ENCODE measurements at regions of chr1 and their contacts with region 1.

Region 1: DNA sequence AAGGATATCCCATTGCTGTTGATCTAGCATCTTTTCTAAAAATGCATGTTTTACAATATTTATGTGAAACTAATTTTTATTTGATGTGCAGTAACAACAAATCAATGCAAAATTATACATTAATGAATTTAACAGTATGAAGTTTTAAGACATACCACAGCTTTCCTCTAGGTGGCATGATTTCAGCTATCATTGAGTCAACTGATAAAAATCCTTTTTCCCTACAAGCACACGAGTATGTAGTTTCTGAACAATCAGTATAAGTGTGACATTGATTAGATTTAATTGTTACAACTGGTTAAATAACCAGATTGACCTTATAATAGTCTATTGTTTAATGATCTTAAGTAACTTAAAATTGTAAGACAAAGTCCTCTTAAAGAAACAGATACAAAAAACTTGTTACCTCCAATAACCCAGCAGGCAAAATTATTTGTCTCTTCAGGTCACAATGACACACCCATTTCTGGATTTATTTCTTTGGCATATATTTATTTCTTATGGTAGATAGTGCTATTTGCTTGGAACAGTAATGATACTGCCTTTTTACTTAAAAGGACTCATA is 5.8 kb upstream of the TGFB2 start:
- DNase-seq: no peak
- H3K4me3 ChIP-seq: no peak overlapping the region
- H3K4me3 Mint-ChIP-seq: no peak overlapping the region
- H3K27ac ChIP-seq: no peak overlapping the region
- H3K27ac Mint-ChIP-seq: no peak overlapping the region
- H3K4me1 ChIP-seq: peaks cover under 1% of the 10 kb centered on the region
- H3K4me1 Mint-ChIP-seq: no peaks in the 10 kb centered on the region
- H3K27me3 ChIP-seq: no peaks in the 10 kb centered on the region
- H3K27me3 Mint-ChIP-seq: no peaks in the 10 kb centered on the region

Region 2: DNA sequence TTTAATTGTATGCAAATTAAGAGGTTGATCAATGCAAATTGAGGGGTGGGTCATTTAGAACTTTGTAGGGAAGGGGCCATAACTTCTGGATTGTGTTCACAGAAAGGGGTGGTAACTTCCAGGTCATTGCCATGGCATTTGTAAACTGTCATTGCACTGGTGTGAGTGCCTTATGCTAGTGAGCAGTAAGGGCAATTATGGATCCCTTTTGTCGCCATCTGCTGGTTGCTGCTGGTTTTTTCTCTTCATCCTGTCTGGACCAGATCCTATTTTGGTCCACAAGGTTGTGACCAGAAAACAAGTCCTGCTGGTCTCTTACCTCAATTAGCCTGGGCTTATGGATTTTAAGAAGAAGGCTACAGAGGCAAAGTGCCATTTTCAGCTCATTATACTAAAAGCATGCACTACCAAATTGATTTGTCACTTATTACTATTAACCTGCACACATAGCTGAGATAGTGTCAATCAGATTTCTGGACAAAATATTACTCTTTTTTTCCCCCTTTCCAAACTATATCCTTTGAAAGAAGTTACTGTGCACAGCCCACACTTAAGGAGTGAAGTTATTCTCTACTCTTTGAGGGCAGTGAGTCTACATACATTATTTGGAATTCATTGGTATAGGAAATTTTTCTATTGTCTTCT is 1077.4 kb after region 1 on chr1:
- CTCF ChIA-PET with region 1: no interaction called
- POLR2A ChIA-PET with region 1: no interaction called
- intact Hi-C with region 1: loop called (anchors 2 kb)
- DNase-seq: peak in 4 of 5 donors; percentile 12 to 33 (median 20)
- H3K4me3 ChIP-seq: no peak overlapping the region
- H3K4me3 Mint-ChIP-seq: no peak overlapping the region
- H3K27ac ChIP-seq: no peak overlapping the region
- H3K27ac Mint-ChIP-seq: no peak overlapping the region
- H3K4me1 ChIP-seq: no peaks in the 10 kb centered on the region
- H3K4me1 Mint-ChIP-seq: no peaks in the 10 kb centered on the region
- H3K27me3 ChIP-seq: no peaks in the 10 kb centered on the region
- H3K27me3 Mint-ChIP-seq: no peaks in the 10 kb centered on the region